ENCODE measurements at regions of chr5 and their contacts with region 1.

Region 1: GRCh38 chr5:150458819-150459557 is 9.4 kb upstream of the RPS14 start:
- DNase-seq: peak in 3 of 4 donors; percentile 76 to 95 (median 76)
- ATAC-seq: peak; percentile 98
- H3K4me3 ChIP-seq: no peak overlapping the region
- H3K27ac ChIP-seq: no peak overlapping the region
- H3K4me1 ChIP-seq: peaks cover 0 to 42% of the 10 kb centered on the region in 2 donors
- H3K27me3 ChIP-seq: no peaks in the 10 kb centered on the region
- CTCF ChIP-seq: peak; percentile 78 to 88

Region 2: DNA sequence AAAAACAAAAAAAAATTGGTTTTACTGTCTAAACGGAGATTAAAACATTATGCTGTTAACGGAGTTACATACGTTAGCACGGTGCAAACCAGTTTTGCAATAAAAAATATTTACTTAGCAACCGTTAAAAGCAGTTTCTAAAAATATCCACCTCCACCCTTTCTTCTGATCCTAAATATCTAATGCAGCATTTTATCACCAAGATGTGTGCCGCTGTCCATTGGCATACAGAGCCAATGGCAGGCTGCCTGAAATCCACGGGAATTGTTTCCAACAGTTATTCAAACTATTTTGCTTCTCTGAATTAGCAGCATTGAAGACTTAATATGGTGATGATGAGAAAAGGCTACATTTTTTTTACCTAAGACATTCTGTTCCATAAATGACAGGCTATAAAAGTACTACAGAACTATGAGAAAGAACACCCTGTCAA is 969.4 kb before region 1 on chr5:
- intact Hi-C with region 1: no loop called
- DNase-seq: peak in 2 of 4 donors; percentile 54 to 69
- ATAC-seq: peak; percentile 30
- H3K4me3 ChIP-seq: no peak overlapping the region
- H3K27ac ChIP-seq: peak overlapping the region; percentile 21 to 64
- H3K4me1 ChIP-seq: peaks cover 22 to 35% of the 10 kb centered on the region in 2 donors
- H3K27me3 ChIP-seq: no peaks in the 10 kb centered on the region
- CTCF ChIP-seq: no peak

Region 3: GRCh38 chr5:150302301-150303069 is 156.5 kb before region 1 on chr5 and contains the start of gene ARSI:
- intact Hi-C with region 1: no loop called
- DNase-seq: peak in 3 of 4 donors; percentile 59 to 95 (median 91)
- ATAC-seq: peak; percentile 76
- H3K4me3 ChIP-seq: peak within 1 kb of the TSS; percentile 27 to 32
- H3K27ac ChIP-seq: peak within 1 kb of the TSS; percentile 28 to 69
- H3K4me1 ChIP-seq: peaks cover 12 to 17% of the 10 kb centered on the region in 2 donors
- H3K27me3 ChIP-seq: peaks cover 11 to 50% of the 10 kb centered on the region in 2 donors
- CTCF ChIP-seq: no peak
- polyA plus RNA-seq, gene ARSI: 19.2 to 31.8 (median 25.0) TPM

Region 4: GRCh38 chr5:150523472-150524350 is 64.7 kb after region 1 on chr5:
- intact Hi-C with region 1: loop called in 1 of 2 experiments (anchors 10 kb)
- DNase-seq: peak in 1 of 4 donors; percentile 69
- ATAC-seq: peak; percentile 70
- H3K4me3 ChIP-seq: no peak overlapping the region
- H3K27ac ChIP-seq: peak overlapping the region; percentile 67 to 71
- H3K4me1 ChIP-seq: peaks cover 20 to 69% of the 10 kb centered on the region in 2 donors
- H3K27me3 ChIP-seq: no peaks in the 10 kb centered on the region
- CTCF ChIP-seq: peak; percentile 54 to 65

Region 5: GRCh38 chr5:150544611-150545219 is 85.7 kb after region 1 on chr5:
- intact Hi-C with region 1: loop called in 1 of 2 experiments (anchors 5 kb)
- DNase-seq: peak in 3 of 4 donors; percentile 59 to 89 (median 78)
- ATAC-seq: peak; percentile 84
- H3K4me3 ChIP-seq: no peak overlapping the region
- H3K27ac ChIP-seq: no peak overlapping the region
- H3K4me1 ChIP-seq: peaks cover 4 to 42% of the 10 kb centered on the region in 2 donors
- H3K27me3 ChIP-seq: no peaks in the 10 kb centered on the region
- CTCF ChIP-seq: peak; percentile 85 to 90

Region 6: GRCh38 chr5:150656191-150657132 is 197.5 kb after region 1 on chr5:
- intact Hi-C with region 1: loop called in 1 of 2 experiments (anchors 5 kb)
- DNase-seq: peak in 3 of 4 donors; percentile 65 to 93 (median 91)
- ATAC-seq: peak; percentile 83
- H3K4me3 ChIP-seq: peak overlapping the region; percentile 35 to 37
- H3K27ac ChIP-seq: peak overlapping the region; percentile 7 to 45
- H3K4me1 ChIP-seq: peaks cover 4 to 11% of the 10 kb centered on the region in 2 donors
- H3K27me3 ChIP-seq: no peaks in the 10 kb centered on the region
- CTCF ChIP-seq: peak; percentile 53 to 70

Region 7: DNA sequence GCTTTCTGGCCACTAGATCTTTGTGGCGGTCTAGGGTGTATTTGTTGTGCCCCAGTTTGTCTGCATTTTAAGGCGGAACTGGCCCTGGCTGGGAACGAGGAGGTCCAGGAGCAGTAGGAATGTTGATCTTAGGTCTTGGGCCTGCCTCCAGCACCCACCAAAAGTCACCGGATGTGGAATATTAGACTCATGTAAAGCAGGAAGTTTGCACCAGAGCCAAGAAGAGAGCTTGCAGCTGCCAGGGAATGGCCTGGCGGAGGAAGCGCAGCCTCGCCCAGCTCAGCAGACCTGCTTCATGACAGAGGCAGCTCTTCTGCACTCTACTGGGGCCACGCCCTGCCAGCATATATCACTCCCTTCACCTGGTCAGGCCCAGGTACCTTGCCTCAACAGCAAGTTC is 564.7 kb after region 1 on chr5:
- intact Hi-C with region 1: no loop called
- DNase-seq: peak in 2 of 4 donors; percentile 61 to 80
- ATAC-seq: peak; percentile 7
- H3K4me3 ChIP-seq: peak overlapping the region; percentile 0 to 61
- H3K27ac ChIP-seq: peak overlapping the region; percentile 81 to 84
- H3K4me1 ChIP-seq: peaks cover 33 to 96% of the 10 kb centered on the region in 2 donors
- H3K27me3 ChIP-seq: no peaks in the 10 kb centered on the region
- CTCF ChIP-seq: no peak

Measured in left lung (tissue), 14 donors.